Calu3 (cell line): ENCODE measurements at regions of chr15 and their contacts with region 1.

Region 1: GRCh38 chr15:51401872-51402517 is 60.5 kb downstream of the GLDN start:
- DNase-seq: peak; percentile 72
- H3K4me3 Mint-ChIP-seq: no peak overlapping the region
- H3K27ac Mint-ChIP-seq: no peak overlapping the region
- H3K4me1 Mint-ChIP-seq: no peaks in the 10 kb centered on the region
- H3K27me3 Mint-ChIP-seq: peaks cover 88% of the 10 kb centered on the region
- CTCF ChIP-seq: peak; percentile 75

Region 2: DNA sequence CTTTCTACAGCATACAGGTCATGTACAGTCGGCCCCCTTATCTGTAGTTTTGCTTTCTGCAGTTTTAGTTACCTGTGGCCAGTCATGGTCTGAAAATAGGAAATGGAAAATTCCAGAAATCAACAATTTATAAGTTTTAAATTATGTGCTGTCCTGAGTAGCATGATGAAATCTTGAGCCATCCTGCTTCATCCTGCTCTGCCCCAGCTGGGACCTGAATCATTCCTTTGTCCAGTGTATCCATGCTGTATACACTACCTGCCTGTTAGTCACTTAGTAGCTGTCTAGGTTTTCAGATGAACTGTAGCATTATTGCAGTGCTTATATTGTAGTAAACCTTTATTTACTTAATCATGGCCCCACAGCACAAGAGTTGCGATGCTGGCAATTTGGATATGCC is 448.7 kb before region 1 on chr15:
- CTCF ChIA-PET with region 1: no interaction called
- intact Hi-C with region 1: no loop called
- DNase-seq: no peak
- H3K4me3 Mint-ChIP-seq: no peak overlapping the region
- H3K27ac Mint-ChIP-seq: peak overlapping the region; percentile 19
- H3K4me1 Mint-ChIP-seq: no peaks in the 10 kb centered on the region
- H3K27me3 Mint-ChIP-seq: no peaks in the 10 kb centered on the region
- CTCF ChIP-seq: no peak

Region 3: DNA sequence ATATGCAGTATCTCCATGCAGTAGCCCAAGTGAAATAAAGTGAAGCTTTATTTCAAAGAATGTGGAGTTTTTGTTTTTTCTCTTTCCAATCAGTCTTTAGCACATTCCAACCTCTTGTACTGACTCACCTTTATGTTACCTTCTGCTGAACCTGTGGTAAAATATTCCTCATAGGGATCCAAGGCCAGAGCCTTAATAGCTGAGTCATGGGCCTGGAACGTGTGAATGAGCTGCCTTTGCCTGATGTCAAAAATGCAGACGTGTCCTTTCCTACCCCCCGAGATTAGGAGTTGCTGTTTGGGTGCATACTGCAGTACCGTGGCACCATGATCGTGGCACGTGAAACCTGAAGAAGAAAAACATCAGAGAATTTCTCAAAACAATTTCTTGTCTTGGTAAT is 48.0 kb after region 1 on chr15:
- CTCF ChIA-PET with region 1: interaction called, 5 read pairs
- intact Hi-C with region 1: loop called (anchors 5 kb)
- DNase-seq: peak; percentile 64
- H3K4me3 Mint-ChIP-seq: peak overlapping the region; percentile 21
- H3K27ac Mint-ChIP-seq: no peak overlapping the region
- H3K4me1 Mint-ChIP-seq: peaks cover 46% of the 10 kb centered on the region
- H3K27me3 Mint-ChIP-seq: no peaks in the 10 kb centered on the region
- CTCF ChIP-seq: no peak